IMR-90 (cell line): ENCODE measurements at regions of chr16 and their contacts with region 1.

Region 1: DNA sequence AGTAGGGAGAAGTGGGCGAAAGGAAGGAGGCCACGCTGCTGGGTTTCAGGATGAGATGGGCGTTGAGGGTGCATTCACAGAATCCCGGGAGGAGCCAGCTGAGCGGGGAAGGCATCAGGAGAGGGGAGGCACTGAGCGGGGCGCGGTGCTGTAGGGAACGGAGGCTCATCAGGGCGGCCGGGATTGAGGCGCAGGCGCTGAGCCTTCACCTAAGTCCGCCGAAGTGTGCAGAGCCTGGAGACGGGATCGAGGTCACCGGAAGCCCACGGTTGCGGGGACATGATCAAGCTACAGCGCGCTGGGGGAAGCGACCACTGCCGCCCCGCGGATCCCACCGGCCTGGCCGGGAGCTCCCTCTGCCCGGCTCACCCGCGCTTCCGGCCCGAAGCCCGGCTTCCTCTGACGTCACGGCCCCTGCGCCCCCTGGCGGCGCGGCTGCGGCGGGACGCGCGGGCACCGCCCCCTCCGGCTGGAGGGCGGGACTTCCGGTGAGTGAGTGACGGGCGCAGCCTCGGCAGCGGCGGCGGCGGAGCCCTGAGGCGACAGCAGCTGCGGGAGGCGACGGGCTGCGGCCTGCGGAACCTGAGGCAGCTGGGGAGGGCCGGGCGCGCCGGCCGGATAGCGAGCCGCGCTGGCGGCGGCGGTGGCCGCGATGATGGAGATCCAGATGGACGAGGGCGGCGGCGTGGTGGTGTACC is at the start of gene MAPK8IP3:
- DNase-seq: peak; percentile 82
- ATAC-seq: peak; percentile 79
- H3K4me3 ChIP-seq: peak within 1 kb of the TSS; percentile 94
- H3K27ac ChIP-seq: peak within 1 kb of the TSS; percentile 88
- H3K4me1 ChIP-seq: peaks cover 14% of the 10 kb centered on the region
- H3K27me3 ChIP-seq: no peaks in the 10 kb centered on the region
- CTCF ChIP-seq: peak; percentile 100
- POLR2A ChIP-seq: peak; percentile 77; the same call in 1 of the 2 replicates
- RAD21 ChIP-seq: no peak
- total RNA-seq, gene MAPK8IP3: 15.6 and 17.0 TPM in 2 replicates

Region 2: GRCh38 chr16:1450218-1450617 is 255.6 kb before region 1 on chr16:
- CTCF ChIA-PET with region 1: no interaction called
- POLR2A ChIA-PET with region 1: no interaction called
- dilution Hi-C with region 1: no loop called
- in situ Hi-C with region 1: no loop called
- intact Hi-C with region 1: no loop called
- DNase-seq: no peak
- ATAC-seq: no peak
- H3K4me3 ChIP-seq: no peak overlapping the region
- H3K27ac ChIP-seq: no peak overlapping the region
- H3K4me1 ChIP-seq: no peaks in the 10 kb centered on the region
- H3K27me3 ChIP-seq: no peaks in the 10 kb centered on the region
- CTCF ChIP-seq: no peak
- POLR2A ChIP-seq: no peak
- RAD21 ChIP-seq: no peak

Region 3: DNA sequence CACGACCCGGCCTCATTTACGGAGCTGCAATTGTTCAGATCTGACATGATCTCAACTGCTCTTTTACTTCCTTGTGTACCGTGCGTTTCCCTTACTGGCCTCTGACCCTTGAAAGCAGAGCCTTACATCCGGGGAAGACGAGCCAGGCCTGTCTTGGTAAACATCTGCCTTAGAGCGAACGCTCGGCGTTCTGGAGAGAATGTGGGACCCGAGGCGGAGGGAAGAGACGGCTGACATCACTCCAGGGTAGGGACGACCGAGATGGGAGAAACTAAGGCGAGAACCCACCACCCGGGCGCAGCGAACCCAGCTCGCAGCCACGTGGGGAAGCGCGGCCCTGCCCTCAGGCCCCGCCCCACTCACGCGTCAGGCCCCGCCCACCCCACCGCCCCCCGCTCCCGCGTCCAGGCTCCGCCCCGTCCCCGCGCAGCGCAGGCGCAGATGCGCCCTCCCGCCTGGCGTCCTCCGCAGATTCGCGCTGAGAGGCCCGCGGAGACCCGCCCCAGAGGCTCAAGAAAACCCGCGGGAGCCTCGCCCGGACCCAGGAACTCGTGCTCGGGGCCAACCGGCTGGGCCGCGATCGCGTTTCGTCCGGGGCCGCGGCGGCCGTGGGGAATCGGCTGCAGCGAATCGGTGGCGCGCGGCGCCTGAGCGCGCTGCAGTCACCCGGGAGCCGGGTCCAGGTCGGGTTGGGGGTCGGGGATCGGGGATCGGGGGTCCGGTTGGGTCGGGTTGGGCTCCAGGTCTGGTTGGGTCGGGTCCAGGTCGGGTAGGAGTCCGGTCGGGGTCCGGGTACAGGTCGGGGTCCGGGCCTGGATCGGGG is 212.7 kb before region 1 on chr16 and contains the start of gene TELO2:
- CTCF ChIA-PET with region 1: no interaction called
- POLR2A ChIA-PET with region 1: no interaction called
- dilution Hi-C with region 1: no loop called
- in situ Hi-C with region 1: no loop called
- intact Hi-C with region 1: loop called (anchors 5 kb)
- DNase-seq: peak; percentile 70
- ATAC-seq: peak; percentile 92
- H3K4me3 ChIP-seq: peak within 1 kb of the TSS; percentile 65
- H3K27ac ChIP-seq: peak within 1 kb of the TSS; percentile 96
- H3K4me1 ChIP-seq: peaks cover 12% of the 10 kb centered on the region
- H3K27me3 ChIP-seq: no peaks in the 10 kb centered on the region
- CTCF ChIP-seq: no peak
- POLR2A ChIP-seq: no peak; the same call in 1 of the 2 replicates
- RAD21 ChIP-seq: no peak
- total RNA-seq, gene TELO2: 5.8 and 6.6 TPM in 2 replicates

Region 4: DNA sequence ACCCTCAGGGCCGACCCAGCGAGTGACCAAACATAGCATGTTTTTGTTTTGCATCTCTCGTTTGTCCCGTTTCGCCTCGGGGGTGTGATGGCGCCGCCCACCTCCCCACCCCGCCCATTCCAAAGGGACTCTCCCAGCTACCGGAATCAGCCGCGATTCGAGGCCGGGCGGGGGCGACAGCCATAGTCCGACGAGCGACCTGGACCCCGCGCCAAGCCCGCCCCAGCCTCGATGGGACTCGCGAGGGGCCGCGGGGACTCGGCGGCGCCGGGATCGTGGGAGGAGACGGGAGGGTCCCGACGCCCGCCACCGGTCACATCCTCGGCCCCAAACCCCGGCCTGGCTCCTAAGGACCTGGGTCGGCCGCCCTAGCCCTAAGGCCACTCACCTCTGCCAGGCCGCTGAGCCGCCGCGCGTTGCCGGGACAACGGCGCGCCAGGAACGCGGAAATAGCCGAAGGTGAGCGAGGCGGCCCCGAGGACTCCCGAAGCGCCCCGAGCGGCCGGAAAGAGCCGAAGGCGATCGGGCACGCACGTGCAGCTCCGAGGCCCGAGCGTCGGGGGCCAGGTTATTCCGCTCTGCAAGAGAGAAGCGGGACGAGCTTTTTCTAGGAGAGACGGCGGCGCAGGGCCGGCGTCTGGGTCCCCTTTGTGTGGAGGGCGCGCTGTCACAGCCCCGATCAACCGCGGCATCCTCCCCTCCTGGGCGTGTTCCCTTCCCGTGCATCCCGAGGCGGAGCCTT is 95.4 kb before region 1 on chr16:
- CTCF ChIA-PET with region 1: no interaction called
- POLR2A ChIA-PET with region 1: no interaction called
- dilution Hi-C with region 1: no loop called
- in situ Hi-C with region 1: no loop called
- intact Hi-C with region 1: loop called (anchors 5 kb)
- DNase-seq: peak; percentile 73
- ATAC-seq: peak; percentile 69
- H3K4me3 ChIP-seq: peak overlapping the region; percentile 73
- H3K27ac ChIP-seq: peak overlapping the region; percentile 56
- H3K4me1 ChIP-seq: peaks cover 7% of the 10 kb centered on the region; the same call in 1 of the 2 replicates
- H3K27me3 ChIP-seq: no peaks in the 10 kb centered on the region
- CTCF ChIP-seq: no peak
- POLR2A ChIP-seq: peak; percentile 47
- RAD21 ChIP-seq: no peak

Region 5: GRCh38 chr16:1734123-1734832 is 28.4 kb after region 1 on chr16:
- CTCF ChIA-PET with region 1: interaction called, 4 read pairs
- POLR2A ChIA-PET with region 1: interaction called, 10 read pairs
- dilution Hi-C with region 1: no loop called
- in situ Hi-C with region 1: no loop called
- intact Hi-C with region 1: no loop called
- DNase-seq: no peak
- ATAC-seq: no peak
- H3K4me3 ChIP-seq: no peak overlapping the region
- H3K27ac ChIP-seq: no peak overlapping the region
- H3K4me1 ChIP-seq: no peaks in the 10 kb centered on the region
- H3K27me3 ChIP-seq: no peaks in the 10 kb centered on the region
- CTCF ChIP-seq: no peak
- POLR2A ChIP-seq: no peak
- RAD21 ChIP-seq: no peak